ENCODE measurements at regions of chr7 and their contacts with region 1.

Region 1: DNA sequence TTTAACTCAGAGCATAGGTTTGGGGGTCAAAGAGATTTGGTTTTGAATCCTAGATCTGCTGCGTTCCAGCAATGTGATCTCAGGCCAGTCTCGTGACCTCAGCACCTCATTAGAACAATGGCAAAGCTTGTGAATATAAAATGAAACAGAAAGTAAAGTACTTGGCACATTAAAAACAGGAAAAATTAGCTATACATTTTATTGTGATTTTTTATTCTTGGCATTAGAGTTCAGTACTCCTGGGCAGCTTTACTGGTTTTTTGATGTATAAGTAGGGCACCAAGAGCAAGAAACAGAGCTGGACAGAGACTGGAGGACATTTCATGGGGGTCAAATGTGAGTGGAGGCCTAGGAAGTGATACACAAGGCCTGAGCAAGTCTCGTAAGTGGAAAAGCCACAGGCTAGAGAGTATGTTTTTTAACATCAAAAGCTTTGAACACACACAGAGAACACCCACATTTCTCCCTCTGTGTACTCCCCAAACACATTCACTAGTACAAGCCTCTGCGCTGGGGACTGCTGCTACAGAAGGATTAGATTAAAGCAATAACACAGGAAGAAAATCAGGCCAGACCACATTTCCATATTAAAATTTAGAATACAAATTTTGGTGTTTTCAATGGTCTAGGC is 157.2 kb upstream of the SLC25A13 start:
- DNase-seq: peak; percentile 69
- H3K4me3 Mint-ChIP-seq: peak overlapping the region; percentile 69
- H3K27ac Mint-ChIP-seq: peak overlapping the region; percentile 89
- H3K4me1 Mint-ChIP-seq: peaks cover 23% of the 10 kb centered on the region
- H3K27me3 Mint-ChIP-seq: peaks cover 6% of the 10 kb centered on the region

Region 2: DNA sequence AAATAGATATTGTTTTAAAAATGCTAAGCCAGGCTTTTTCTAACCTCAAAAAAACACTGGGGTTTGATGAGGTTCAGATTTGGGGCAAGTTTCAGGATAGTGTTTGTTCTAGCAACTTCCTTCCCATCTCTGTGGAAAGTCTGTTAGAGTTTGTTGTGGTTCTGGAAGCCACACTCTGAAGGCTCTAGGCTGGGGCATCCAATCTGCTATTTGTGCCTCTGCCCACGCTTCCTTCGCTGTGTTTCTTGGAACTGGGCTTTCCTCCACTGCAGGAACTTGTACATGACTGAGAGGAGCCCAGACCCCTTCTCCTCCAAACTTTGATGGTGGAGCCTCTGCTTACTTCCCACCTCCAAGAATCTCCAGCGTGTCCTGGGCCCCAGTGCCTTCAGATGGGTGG is 48.8 kb before region 1 on chr7:
- intact Hi-C with region 1: loop called (anchors 5 kb)
- DNase-seq: peak; percentile 71
- H3K4me3 Mint-ChIP-seq: peak overlapping the region; percentile 41
- H3K27ac Mint-ChIP-seq: peak overlapping the region; percentile 48
- H3K4me1 Mint-ChIP-seq: peaks cover 29% of the 10 kb centered on the region
- H3K27me3 Mint-ChIP-seq: peaks cover 7% of the 10 kb centered on the region

Region 3: DNA sequence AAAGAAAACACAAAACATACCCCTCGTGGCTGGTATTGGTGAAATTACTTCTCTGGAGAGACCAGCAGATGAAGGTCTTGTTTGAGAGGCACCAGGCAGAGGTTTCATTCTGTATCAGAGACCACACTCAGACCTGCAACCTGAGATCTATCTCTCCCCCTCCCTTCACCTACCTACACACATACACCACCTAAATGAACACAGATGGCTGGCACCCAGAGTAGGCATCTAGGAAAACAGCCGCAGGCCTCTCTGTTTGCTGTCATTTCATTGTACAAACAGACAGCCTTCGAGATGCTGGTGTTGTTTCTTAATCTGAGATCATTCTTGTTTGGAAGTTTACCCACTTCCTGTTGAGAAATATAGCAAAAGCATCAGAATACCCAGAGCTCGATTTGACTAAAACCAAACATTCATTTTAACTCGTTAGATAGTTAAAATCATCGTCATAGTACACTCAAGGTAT is 16.7 kb after region 1 on chr7:
- intact Hi-C with region 1: loop called (anchors 2 kb)
- DNase-seq: peak; percentile 74
- H3K4me3 Mint-ChIP-seq: peak overlapping the region; percentile 57
- H3K27ac Mint-ChIP-seq: peak overlapping the region; percentile 89
- H3K4me1 Mint-ChIP-seq: peaks cover 18% of the 10 kb centered on the region
- H3K27me3 Mint-ChIP-seq: peaks cover 9% of the 10 kb centered on the region

Region 4: GRCh38 chr7:96521068-96521894 is 42.2 kb after region 1 on chr7:
- intact Hi-C with region 1: no loop called
- DNase-seq: no peak
- H3K4me3 Mint-ChIP-seq: no peak overlapping the region
- H3K27ac Mint-ChIP-seq: no peak overlapping the region
- H3K4me1 Mint-ChIP-seq: peaks cover 8% of the 10 kb centered on the region
- H3K27me3 Mint-ChIP-seq: peaks cover 24% of the 10 kb centered on the region

Region 5: GRCh38 chr7:96794063-96794462 is 314.9 kb after region 1 on chr7:
- intact Hi-C with region 1: no loop called
- DNase-seq: no peak
- H3K4me3 Mint-ChIP-seq: no peak overlapping the region
- H3K27ac Mint-ChIP-seq: no peak overlapping the region
- H3K4me1 Mint-ChIP-seq: no peaks in the 10 kb centered on the region
- H3K27me3 Mint-ChIP-seq: peaks cover 2% of the 10 kb centered on the region

Region 6: DNA sequence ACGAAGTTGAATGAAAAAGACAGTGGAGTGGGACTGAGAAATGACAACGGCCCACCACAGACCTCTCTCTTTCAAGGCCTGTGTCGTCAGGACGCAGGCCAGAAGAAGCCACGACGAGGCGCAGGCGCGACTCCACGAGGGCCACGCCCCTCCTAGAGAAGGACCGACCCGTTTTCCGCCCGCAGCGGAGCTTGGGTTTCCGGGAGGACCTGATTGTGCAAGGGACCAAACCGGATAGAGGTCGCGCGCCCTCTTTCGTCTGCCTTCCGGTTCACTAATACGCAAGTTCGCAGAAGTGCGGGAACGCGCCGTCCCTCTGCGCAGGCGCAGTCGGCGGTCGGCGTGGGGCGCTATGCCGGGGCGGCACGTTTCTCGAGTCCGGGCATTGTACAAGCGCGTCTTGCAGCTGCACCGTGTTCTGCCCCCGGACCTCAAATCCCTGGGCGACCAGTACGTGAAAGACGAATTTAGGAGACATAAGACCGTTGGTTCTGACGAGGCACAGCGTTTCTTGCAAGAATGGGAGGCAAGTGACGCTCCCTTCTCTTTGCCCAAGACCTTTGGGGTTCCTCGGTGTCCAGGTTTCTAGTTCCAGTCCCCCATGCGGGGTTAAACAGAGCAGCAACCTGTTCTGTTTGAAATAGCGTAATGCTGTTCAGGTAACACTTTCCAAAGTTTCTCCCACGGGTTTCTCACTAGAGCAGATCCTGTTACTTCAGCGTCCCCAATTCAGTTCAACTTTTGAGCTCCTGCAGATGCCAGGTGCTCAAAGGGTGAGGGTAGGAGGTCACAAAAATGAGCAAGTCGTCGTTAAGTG is 638.5 kb after region 1 on chr7 and contains the start of gene SDHAF3:
- intact Hi-C with region 1: loop called (anchors 5 kb)
- DNase-seq: peak; percentile 99
- H3K4me3 Mint-ChIP-seq: peak within 1 kb of the TSS; percentile 93
- H3K27ac Mint-ChIP-seq: peak within 1 kb of the TSS; percentile 95
- H3K4me1 Mint-ChIP-seq: peaks cover 26% of the 10 kb centered on the region
- H3K27me3 Mint-ChIP-seq: no peaks in the 10 kb centered on the region
- total RNA-seq, gene SDHAF3: 24.9 and 27.8 TPM in 2 replicates